Endothelial cell of umbilical vein (primary cell): ENCODE measurements at regions of chr13 and their contacts with region 1.

Region 1: DNA sequence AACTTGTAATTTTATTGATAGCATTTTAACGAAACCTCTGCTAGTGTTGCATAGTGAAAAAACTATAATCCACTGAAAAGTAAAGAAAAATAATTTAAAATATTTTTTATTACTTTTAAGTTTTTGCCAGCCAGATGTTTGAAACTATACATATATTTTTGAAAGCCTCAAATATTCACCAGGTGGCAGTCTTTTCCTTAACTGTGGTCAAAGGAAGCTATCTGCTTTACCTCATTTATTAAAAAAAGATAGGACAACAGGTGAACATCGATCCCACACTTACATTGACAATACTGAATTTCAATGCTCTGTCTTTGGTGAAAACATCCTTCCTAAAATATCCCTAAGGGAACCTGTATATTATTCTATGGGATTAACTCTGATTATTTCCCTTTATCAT is 100.5 kb downstream of the TRPC4 start:
- DNase-seq: no peak
- H3K4me3 ChIP-seq: no peak overlapping the region
- H3K27ac ChIP-seq: no peak overlapping the region
- H3K4me1 ChIP-seq: no peaks in the 10 kb centered on the region
- H3K27me3 ChIP-seq: no peaks in the 10 kb centered on the region
- CTCF ChIP-seq: no peak
- POLR2A ChIP-seq: no peak

Region 2: GRCh38 chr13:37753776-37754175 is 15.3 kb before region 1 on chr13:
- CTCF ChIA-PET with region 1: interaction called, 3 read pairs
- POLR2A ChIA-PET with region 1: no interaction called
- dilution Hi-C with region 1: no loop called
- intact Hi-C with region 1: loop called (anchors 2 kb)
- DNase-seq: no peak
- H3K4me3 ChIP-seq: no peak overlapping the region
- H3K27ac ChIP-seq: no peak overlapping the region
- H3K4me1 ChIP-seq: no peaks in the 10 kb centered on the region
- H3K27me3 ChIP-seq: peaks cover 0 to 2% of the 10 kb centered on the region in 2 experiments
- CTCF ChIP-seq: no peak
- POLR2A ChIP-seq: no peak